Endothelial cell of umbilical vein (primary cell): ENCODE measurements at regions of chr14 and their contacts with region 1.

Region 1: GRCh38 chr14:65019944-65020566 is 33.4 kb downstream of the FNTB start:
- DNase-seq: peak; percentile 82
- H3K4me3 ChIP-seq: no peak overlapping the region
- H3K27ac ChIP-seq: no peak overlapping the region
- H3K4me1 ChIP-seq: no peaks in the 10 kb centered on the region
- H3K27me3 ChIP-seq: no peaks in the 10 kb centered on the region
- CTCF ChIP-seq: peak; percentile 63
- POLR2A ChIP-seq: no peak

Region 2: DNA sequence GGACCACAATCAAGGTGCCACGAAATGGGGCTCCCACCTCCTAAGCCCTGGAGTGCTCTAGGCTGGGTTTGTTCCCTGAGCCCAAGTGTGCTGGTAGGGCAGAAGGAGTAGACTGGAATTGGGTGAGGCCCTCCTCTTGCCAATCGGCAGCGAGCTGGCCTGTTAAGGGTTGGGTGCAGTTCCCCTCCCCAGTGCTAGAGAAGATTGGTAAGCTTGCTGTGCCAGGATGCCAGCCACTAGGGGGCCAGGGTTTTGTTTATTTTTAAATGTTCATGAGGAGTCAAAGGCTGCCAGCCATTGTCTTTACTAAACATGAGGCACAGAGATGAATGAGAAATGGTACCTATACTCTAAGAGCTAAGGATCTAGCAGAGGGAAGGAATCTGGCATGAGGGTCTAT is 220.1 kb before region 1 on chr14:
- CTCF ChIA-PET with region 1: interaction called, 14 read pairs
- POLR2A ChIA-PET with region 1: no interaction called
- dilution Hi-C with region 1: no loop called
- intact Hi-C with region 1: loop called (anchors 2 kb)
- DNase-seq: peak; percentile 38
- H3K4me3 ChIP-seq: no peak overlapping the region
- H3K27ac ChIP-seq: no peak overlapping the region
- H3K4me1 ChIP-seq: no peaks in the 10 kb centered on the region
- H3K27me3 ChIP-seq: peaks cover 0 to 4% of the 10 kb centered on the region in 2 experiments
- CTCF ChIP-seq: peak; percentile 47 to 61
- POLR2A ChIP-seq: no peak

Region 3: DNA sequence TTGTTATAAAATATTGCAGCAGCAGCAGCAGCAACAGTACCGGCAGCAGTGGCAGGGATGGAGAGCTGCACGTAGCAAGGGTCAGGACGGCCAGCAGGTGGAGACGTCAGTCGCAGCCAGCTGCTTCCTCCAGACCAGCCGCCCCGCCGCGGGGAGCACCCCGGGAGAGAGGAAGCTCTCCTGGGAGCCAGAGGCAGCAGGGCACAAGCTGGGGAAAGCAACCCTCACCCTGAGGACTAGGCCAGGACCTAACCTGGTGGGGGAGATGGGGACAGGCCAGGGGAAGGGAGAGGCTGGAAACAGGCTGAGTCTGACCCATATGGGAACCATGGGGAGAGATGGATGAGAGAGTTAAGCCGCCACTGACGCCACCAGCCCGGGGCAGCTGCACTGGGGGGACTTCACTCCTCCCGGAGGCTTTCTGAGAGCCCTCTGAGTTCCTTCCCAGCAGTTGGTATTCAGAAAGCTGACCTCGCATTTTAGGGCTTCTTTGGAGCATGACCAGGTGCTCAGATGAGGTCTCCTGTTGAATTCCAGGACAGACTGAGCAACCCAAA is 196.7 kb before region 1 on chr14:
- CTCF ChIA-PET with region 1: interaction called, 25 read pairs
- POLR2A ChIA-PET with region 1: no interaction called
- dilution Hi-C with region 1: no loop called
- intact Hi-C with region 1: no loop called
- DNase-seq: peak; percentile 36
- H3K4me3 ChIP-seq: no peak overlapping the region
- H3K27ac ChIP-seq: no peak overlapping the region
- H3K4me1 ChIP-seq: no peaks in the 10 kb centered on the region
- H3K27me3 ChIP-seq: peaks cover 8 to 19% of the 10 kb centered on the region in 2 experiments
- CTCF ChIP-seq: peak; percentile 70 to 83
- POLR2A ChIP-seq: no peak

Region 4: DNA sequence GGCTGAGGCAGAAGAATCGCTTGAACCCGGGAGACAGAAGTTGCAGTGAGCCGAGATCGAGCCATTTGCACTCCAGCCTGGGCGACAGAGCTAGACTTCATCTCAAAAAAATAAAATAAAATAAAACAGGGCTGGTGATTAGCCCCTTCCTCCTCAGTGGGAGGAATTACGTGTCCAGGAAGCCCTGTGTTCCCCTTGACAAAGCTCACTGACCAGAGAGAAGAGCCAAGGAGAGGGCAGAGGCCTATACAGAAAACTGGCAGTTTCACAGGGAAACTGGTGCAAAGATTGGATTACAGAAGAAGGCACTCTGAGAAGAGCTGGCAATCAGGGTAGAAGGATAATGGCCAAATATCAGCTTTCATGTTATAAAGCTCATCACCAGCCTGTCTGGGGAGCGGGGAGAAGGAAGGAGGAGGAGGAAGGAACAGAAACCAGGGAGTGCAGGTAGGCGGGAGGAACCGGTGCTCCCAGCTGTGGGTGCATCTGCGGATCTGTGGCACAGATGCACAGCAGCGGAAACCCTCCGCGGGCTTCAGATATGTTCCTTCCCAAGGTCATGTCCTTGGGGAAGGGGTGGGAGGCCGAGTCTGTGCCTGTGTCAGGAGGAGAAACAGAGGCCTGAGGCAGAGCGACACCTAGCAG is 54.6 kb before region 1 on chr14:
- CTCF ChIA-PET with region 1: interaction called, 12 read pairs
- POLR2A ChIA-PET with region 1: no interaction called
- dilution Hi-C with region 1: no loop called
- intact Hi-C with region 1: no loop called
- DNase-seq: peak; percentile 74
- H3K4me3 ChIP-seq: no peak overlapping the region
- H3K27ac ChIP-seq: no peak overlapping the region
- H3K4me1 ChIP-seq: peaks cover 8% of the 10 kb centered on the region
- H3K27me3 ChIP-seq: no peaks in the 10 kb centered on the region
- CTCF ChIP-seq: no peak
- POLR2A ChIP-seq: no peak

Region 5: GRCh38 chr14:64997108-64997794 is 22.8 kb before region 1 on chr14:
- CTCF ChIA-PET with region 1: interaction called, 109 read pairs
- POLR2A ChIA-PET with region 1: interaction called, 4 read pairs
- dilution Hi-C with region 1: no loop called
- intact Hi-C with region 1: no loop called
- DNase-seq: no peak
- H3K4me3 ChIP-seq: no peak overlapping the region
- H3K27ac ChIP-seq: no peak overlapping the region
- H3K4me1 ChIP-seq: peaks cover 4% of the 10 kb centered on the region
- H3K27me3 ChIP-seq: no peaks in the 10 kb centered on the region
- CTCF ChIP-seq: no peak
- POLR2A ChIP-seq: no peak

Region 6: DNA sequence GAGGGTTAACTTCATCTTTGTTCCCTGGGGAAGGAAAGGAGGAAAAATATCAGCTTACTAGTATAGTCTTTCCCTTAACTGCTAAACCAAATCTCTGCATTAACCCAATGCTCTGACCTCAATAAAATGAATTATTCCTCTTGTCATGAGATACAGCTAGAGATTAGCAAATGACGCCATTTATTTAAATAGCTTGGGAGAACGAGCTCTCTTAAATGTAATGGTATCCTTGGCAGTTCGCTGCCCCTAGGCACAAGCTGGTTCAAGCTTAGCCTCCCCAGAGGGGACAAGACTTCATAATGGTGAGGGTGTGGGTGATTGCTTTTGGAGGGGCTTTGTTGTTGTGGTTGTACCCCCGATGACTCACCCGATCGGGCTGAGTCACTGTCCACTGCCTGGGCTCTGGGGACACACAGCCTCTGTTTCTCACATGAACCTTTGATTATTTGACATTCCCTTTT is 13.8 kb before region 1 on chr14:
- CTCF ChIA-PET with region 1: interaction called, 29 read pairs
- POLR2A ChIA-PET with region 1: no interaction called
- dilution Hi-C with region 1: no loop called
- intact Hi-C with region 1: no loop called
- DNase-seq: no peak
- H3K4me3 ChIP-seq: no peak overlapping the region
- H3K27ac ChIP-seq: no peak overlapping the region
- H3K4me1 ChIP-seq: no peaks in the 10 kb centered on the region
- H3K27me3 ChIP-seq: no peaks in the 10 kb centered on the region
- CTCF ChIP-seq: no peak
- POLR2A ChIP-seq: no peak

Region 7: DNA sequence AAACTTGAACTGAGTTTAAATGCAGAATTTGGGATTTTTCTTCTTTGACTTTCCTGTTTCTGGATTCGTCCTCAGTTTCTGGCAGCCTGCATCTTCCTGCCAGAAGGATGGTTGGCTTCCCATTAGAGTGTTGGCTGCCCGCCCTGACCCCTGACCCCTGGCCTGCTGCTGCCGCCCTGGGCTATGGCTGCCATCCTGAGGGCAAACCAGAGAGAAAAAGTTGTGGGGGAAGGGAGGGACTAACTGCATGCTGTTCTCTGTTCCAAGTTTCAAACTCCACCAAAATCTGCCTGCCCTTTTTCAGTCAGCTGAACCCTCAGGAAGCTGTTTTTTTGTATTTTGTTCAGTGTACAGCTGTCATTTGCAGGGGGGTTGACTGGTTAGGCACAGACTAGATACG is 15.0 kb after region 1 on chr14:
- CTCF ChIA-PET with region 1: interaction called, 18 read pairs
- POLR2A ChIA-PET with region 1: interaction called, 4 read pairs
- dilution Hi-C with region 1: no loop called
- intact Hi-C with region 1: no loop called
- DNase-seq: peak; percentile 53
- H3K4me3 ChIP-seq: no peak overlapping the region
- H3K27ac ChIP-seq: no peak overlapping the region
- H3K4me1 ChIP-seq: peaks cover 5% of the 10 kb centered on the region
- H3K27me3 ChIP-seq: no peaks in the 10 kb centered on the region
- CTCF ChIP-seq: no peak
- POLR2A ChIP-seq: no peak